ENCODE measurements at regions of chr2 and their contacts with region 1.

Region 1: DNA sequence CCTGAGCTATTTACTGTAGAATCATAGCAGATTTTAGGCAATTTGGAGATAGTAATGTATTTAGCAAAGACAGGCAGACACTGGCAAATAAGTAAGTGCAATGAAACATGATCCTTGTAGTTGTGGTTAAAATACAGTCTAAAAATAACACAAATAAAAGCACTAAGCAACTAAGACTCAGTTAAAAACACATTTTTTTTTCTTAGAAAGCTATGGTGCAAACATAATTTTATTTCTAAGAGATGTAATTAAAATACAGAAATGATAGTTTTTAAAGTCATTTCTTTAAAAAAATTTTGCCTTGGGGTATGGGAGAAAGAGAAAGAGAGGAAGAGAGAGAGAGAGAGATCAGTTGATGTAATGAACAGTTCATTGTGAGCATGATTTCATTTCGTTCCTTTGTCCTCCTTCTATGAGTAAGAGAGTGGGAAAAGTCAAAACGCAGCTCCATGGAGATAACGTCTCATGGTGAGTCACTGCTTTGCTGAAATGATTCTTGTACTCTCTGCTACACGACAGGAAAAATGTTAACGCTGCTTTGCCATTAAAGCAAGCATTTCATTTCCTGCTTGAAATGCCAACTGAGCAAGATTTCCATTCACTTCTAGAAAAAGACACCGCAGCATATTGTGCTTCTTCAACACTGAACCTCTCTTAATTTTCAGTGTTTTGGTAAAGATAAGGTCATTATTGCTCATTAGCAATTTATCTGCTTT is 61.3 kb upstream of the PGAP1 start:
- DNase-seq: peak; percentile 78
- ATAC-seq: peak; percentile 98
- H3K4me3 ChIP-seq: peak overlapping the region; percentile 0 to 47; a peak in 3 of 4 replicates
- H3K27ac ChIP-seq: peak overlapping the region; percentile 77
- H3K4me1 ChIP-seq: peaks cover 11% of the 10 kb centered on the region; the same call in 1 of the 2 replicates
- H3K27me3 ChIP-seq: no peaks in the 10 kb centered on the region
- CTCF ChIP-seq: no peak

Region 2: DNA sequence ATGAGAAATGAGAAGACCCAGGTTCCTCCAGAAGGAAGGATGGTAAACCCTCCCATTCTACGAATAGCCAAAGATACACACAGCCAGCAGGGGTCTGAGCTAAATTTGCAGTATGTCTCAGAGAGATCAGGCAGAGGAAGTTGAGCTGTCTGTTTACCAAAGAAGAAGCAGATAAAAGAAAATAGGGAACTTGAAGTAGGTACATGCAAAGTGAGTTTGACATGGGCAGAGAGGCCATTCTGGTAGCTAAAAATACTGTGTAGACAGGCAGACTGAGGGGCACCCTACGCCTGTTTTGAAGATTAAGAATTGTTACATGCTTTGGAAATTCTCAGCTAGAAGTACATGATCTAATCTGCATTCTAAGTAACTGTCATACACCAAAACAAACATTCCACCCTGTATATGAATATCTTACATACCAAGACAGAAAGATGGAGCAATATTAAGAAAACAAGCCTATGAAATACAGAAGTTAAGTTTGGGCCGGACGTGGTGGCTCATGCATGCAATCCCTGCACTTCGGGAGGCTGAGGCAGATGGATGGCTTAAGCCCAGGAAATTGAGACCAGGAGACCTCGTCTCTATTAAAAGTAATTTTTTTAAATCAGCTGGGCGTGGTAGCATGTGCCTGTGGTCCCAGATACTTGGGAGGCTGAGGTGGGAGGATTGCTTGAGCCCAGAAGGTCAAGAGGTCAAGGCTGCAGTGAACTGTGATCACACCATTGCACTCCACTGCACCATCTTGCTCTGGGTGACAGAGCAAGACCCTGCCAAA is 164.8 kb after region 1 on chr2:
- CTCF ChIA-PET with region 1: no interaction called
- POLR2A ChIA-PET with region 1: no interaction called
- in situ Hi-C with region 1: no loop called
- intact Hi-C with region 1: no loop called
- DNase-seq: peak; percentile 72
- ATAC-seq: peak; percentile 89
- H3K4me3 ChIP-seq: no peak overlapping the region
- H3K27ac ChIP-seq: no peak overlapping the region
- H3K4me1 ChIP-seq: no peaks in the 10 kb centered on the region; the same call in 1 of the 2 replicates
- H3K27me3 ChIP-seq: no peaks in the 10 kb centered on the region
- CTCF ChIP-seq: peak; percentile 11; the same call in 1 of the 2 replicates

Region 3: DNA sequence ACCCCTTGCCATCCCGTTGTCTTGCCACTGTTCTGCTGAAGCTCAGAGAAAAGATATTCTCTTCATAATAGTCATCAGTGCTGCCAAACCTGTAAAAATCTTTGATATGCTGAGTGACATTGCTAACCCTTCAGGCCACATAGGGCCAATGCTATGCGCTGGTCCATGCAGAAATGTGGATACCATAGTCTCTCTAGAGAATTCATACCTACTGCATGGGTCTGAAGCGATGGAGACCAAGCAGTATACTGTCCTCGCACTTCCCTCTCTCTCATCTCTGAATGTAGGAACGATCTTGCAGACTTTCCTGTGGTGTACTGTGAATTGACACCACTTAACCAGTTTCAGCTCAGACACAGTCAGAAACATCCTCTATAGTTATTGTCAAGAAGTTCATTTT is 340.7 kb after region 1 on chr2:
- CTCF ChIA-PET with region 1: no interaction called
- POLR2A ChIA-PET with region 1: interaction called, 10 read pairs
- in situ Hi-C with region 1: no loop called
- intact Hi-C with region 1: no loop called
- DNase-seq: no peak
- ATAC-seq: no peak
- H3K4me3 ChIP-seq: no peak overlapping the region
- H3K27ac ChIP-seq: no peak overlapping the region
- H3K4me1 ChIP-seq: no peaks in the 10 kb centered on the region
- H3K27me3 ChIP-seq: no peaks in the 10 kb centered on the region
- CTCF ChIP-seq: no peak

Measured in Panc1 (cell line).